GM12878 (cell line): ENCODE measurements at regions of chr4 and their contacts with region 1.

Region 1: GRCh38 chr4:113248320-113248719 is 198.9 kb downstream of the ANK2 start:
- DNase-seq: no peak
- ATAC-seq: peak; percentile 61; the same call in 2 of the 3 replicates
- H3K4me3 ChIP-seq: no peak overlapping the region
- H3K27ac ChIP-seq: no peak overlapping the region
- H3K4me1 ChIP-seq: no peaks in the 10 kb centered on the region
- H3K27me3 ChIP-seq: no peaks in the 10 kb centered on the region
- CTCF ChIP-seq: peak in 2 of 3 experiments; percentile 19 to 25; a peak in 2 of 6 replicates
- EP300 ChIP-seq: no peak
- POLR2A ChIP-seq: no peak
- RAD21 ChIP-seq: 0 out of 2 replicates have a peak, but pooled peaks have one; percentile 9

Region 2: GRCh38 chr4:111649308-111649707 is 1599.0 kb before region 1 on chr4:
- CTCF ChIA-PET with region 1: no interaction called
- POLR2A ChIA-PET with region 1: no interaction called
- RAD21 ChIA-PET with region 1: no interaction called
- SMC1A ChIA-PET with region 1: no interaction called
- in situ Hi-C with region 1: no loop called
- intact Hi-C with region 1: no loop called
- DNase-seq: no peak
- ATAC-seq: peak; percentile 46; the same call in 2 of the 3 replicates
- H3K4me3 ChIP-seq: no peak overlapping the region
- H3K27ac ChIP-seq: no peak overlapping the region
- H3K4me1 ChIP-seq: no peaks in the 10 kb centered on the region
- H3K27me3 ChIP-seq: no peaks in the 10 kb centered on the region
- CTCF ChIP-seq: 0 out of 6 replicates have a peak, but pooled peaks of 1 of the 3 experiments have one; percentile 1
- EP300 ChIP-seq: no peak
- POLR2A ChIP-seq: no peak
- RAD21 ChIP-seq: no peak

Region 3: DNA sequence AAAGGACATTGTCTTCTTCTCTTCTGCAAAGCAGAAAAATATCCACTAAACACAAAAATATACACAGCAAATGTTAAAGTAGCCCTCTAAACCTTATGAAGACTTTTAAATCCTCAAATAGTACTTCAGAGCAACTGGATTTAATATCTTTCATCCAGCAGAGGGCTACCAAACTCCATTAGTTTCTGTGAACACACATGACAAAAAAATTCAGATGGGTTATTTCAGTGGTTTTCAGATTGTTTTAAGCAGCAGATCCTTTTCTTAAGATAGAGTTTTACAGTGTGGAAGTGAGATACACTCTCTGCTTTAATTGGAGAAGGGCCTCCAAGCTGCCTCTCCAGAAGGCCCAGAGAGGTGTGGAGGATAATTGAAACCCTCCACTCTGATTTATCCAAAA is 142.2 kb before region 1 on chr4:
- CTCF ChIA-PET with region 1: no interaction called
- POLR2A ChIA-PET with region 1: no interaction called
- RAD21 ChIA-PET with region 1: interaction called, 3 read pairs
- SMC1A ChIA-PET with region 1: no interaction called
- in situ Hi-C with region 1: no loop called
- intact Hi-C with region 1: loop called (anchors 10 kb)
- DNase-seq: no peak
- ATAC-seq: peak; percentile 41; the same call in 1 of the 3 replicates
- H3K4me3 ChIP-seq: no peak overlapping the region
- H3K27ac ChIP-seq: no peak overlapping the region
- H3K4me1 ChIP-seq: no peaks in the 10 kb centered on the region
- H3K27me3 ChIP-seq: no peaks in the 10 kb centered on the region
- CTCF ChIP-seq: peak in 1 of 3 experiments; percentile 38; a peak in 1 of 6 replicates
- EP300 ChIP-seq: no peak
- POLR2A ChIP-seq: no peak
- RAD21 ChIP-seq: peak; percentile 38; the same call in 1 of the 2 replicates